OCI-LY7 (cell line): ENCODE measurements at regions of chr1 and their contacts with region 1.

Region 1: DNA sequence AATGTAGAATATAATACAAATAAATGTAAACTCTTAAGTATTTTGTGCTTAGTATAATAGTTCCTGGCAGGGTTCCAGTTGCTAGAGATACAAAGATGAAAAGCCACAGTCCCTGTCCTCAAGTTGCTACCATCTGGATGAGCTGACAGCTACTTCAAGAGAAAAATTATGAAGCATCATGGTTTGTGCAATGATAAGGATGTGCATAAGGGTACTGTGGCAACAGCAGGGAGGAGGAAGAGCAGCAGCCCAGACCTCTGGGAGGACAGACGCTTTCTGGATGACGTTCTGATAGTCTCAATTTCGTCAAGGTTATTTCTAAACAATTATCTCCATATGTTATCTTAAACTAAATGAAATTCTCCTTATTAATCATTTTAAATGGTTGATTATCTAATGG is 198.9 kb downstream of the NTNG1 start:
- DNase-seq: no peak
- H3K4me3 ChIP-seq: no peak overlapping the region
- H3K27ac ChIP-seq: no peak overlapping the region
- H3K4me1 ChIP-seq: no peaks in the 10 kb centered on the region
- CTCF ChIP-seq: no peak

Region 2: DNA sequence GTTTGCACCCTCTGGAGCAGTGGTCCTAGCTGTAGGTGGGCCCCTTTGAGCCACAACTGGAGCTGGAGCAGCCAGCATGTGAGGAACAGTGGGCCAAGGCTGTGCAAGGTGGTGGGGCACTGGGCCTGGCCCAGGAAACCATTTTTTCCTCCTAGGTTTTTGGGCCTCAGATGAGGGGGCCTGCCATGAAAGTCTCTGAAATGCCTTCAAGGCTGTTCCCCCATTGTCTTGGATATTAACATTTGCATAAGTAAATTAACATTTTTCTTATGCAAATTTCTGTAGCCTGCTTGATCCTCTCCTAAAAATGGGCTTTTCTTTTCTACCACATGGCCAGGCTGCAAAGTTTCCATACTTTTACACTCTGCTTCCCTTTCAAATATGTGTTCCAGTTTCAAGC is 13.1 kb after region 1 on chr1:
- CTCF ChIA-PET with region 1: no interaction called
- POLR2A ChIA-PET with region 1: interaction called, 10 read pairs
- intact Hi-C with region 1: no loop called
- DNase-seq: no peak
- H3K4me3 ChIP-seq: no peak overlapping the region
- H3K27ac ChIP-seq: no peak overlapping the region
- H3K4me1 ChIP-seq: peaks cover 33% of the 10 kb centered on the region
- CTCF ChIP-seq: no peak